A673 (cell line): ENCODE measurements at regions of chr4 and their contacts with region 1.

Region 1: GRCh38 chr4:146273204-146273901 is 59.0 kb downstream of the REELD1 start:
- DNase-seq: no peak
- H3K4me3 ChIP-seq: no peak overlapping the region
- H3K27ac ChIP-seq: no peak overlapping the region
- H3K4me1 ChIP-seq: peaks cover 4% of the 10 kb centered on the region
- H3K27me3 ChIP-seq: no peaks in the 10 kb centered on the region
- CTCF ChIP-seq: no peak

Region 2: DNA sequence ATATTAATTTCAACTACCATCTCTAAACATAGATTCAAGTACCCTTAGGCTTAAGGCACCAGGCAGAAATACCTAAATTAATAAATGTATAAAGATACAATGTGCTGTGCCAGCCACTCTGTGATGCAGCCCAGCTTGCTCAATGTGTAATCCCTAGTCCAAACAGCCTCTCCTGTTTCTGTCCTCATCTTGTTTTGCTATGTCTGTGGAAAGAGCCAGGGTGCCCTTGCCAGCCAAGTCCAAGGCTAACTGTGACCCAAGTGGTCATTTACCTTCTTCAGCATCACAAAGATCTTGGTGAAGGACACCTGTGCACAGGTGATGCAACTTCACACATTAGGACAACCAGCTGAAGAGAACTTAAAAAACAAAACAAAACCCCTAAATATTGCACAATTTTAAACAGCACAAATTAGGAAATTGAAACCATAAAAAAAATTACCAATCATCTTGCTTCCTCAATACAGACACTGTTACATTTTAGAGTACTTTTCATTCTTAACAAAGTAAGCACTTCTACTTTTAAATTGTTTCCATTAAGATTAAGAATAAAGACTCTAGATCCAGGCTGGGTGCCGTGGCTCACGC is 503.8 kb before region 1 on chr4:
- CTCF ChIA-PET with region 1: no interaction called
- POLR2A ChIA-PET with region 1: no interaction called
- intact Hi-C with region 1: no loop called
- DNase-seq: no peak
- H3K4me3 ChIP-seq: no peak overlapping the region
- H3K27ac ChIP-seq: no peak overlapping the region
- H3K4me1 ChIP-seq: no peaks in the 10 kb centered on the region
- H3K27me3 ChIP-seq: no peaks in the 10 kb centered on the region
- CTCF ChIP-seq: no peak

Region 3: GRCh38 chr4:146283758-146284651 is 10.7 kb after region 1 on chr4:
- CTCF ChIA-PET with region 1: no interaction called
- POLR2A ChIA-PET with region 1: no interaction called
- intact Hi-C with region 1: no loop called
- DNase-seq: peak; percentile 11
- H3K4me3 ChIP-seq: no peak overlapping the region
- H3K27ac ChIP-seq: no peak overlapping the region
- H3K4me1 ChIP-seq: peaks cover 25% of the 10 kb centered on the region
- H3K27me3 ChIP-seq: no peaks in the 10 kb centered on the region
- CTCF ChIP-seq: no peak

Region 4: GRCh38 chr4:146310319-146311021 is 37.1 kb after region 1 on chr4:
- CTCF ChIA-PET with region 1: no interaction called
- POLR2A ChIA-PET with region 1: no interaction called
- intact Hi-C with region 1: loop called (anchors 2 kb)
- DNase-seq: no peak
- H3K4me3 ChIP-seq: no peak overlapping the region
- H3K27ac ChIP-seq: no peak overlapping the region
- H3K4me1 ChIP-seq: peaks cover 9% of the 10 kb centered on the region
- H3K27me3 ChIP-seq: no peaks in the 10 kb centered on the region
- CTCF ChIP-seq: no peak

Region 5: GRCh38 chr4:146342600-146343192 is 69.3 kb after region 1 on chr4:
- CTCF ChIA-PET with region 1: no interaction called
- POLR2A ChIA-PET with region 1: no interaction called
- intact Hi-C with region 1: no loop called
- DNase-seq: peak; percentile 77
- H3K4me3 ChIP-seq: no peak overlapping the region
- H3K27ac ChIP-seq: peak overlapping the region; percentile 76
- H3K4me1 ChIP-seq: peaks cover 82% of the 10 kb centered on the region
- H3K27me3 ChIP-seq: no peaks in the 10 kb centered on the region
- CTCF ChIP-seq: peak; percentile 64